Heart left ventricle (tissue), 16 donors: ENCODE measurements at regions of chr15 and their contacts with region 1.

Region 1: DNA sequence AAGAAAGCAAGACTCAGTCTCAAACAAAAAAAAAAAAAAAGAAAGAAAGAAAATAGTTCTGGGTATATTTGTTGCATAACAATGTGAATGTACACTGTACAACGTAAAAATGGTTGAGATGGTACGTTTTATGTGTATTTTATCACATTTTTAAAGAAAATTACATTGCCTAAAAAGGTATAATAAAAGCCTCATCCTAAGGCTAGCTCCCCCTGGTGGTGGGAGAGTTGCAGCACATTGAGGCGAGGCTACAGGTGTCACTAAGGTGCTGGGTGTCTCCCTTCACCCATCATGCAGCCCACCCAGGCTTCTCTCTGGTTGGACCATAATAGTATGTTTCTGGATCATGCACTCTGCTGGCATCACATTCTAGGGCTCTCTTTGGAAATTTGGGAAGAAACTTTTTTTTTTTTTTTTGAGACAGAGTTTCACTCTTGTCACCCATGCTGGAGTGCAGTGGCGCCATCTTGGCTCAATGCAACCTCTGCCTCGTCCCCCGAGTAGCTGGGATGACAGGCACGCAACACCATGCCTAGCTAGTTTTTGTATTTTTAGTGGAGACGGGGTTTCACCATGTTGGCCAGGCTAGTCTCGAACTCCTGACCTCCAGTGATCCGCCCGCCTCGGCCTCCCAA is 12.4 kb upstream of the RAB11A start:
- DNase-seq: peak; percentile 47 to 73 (median 58)
- ATAC-seq: peak in 3 of 4 donors; percentile 42 to 61 (median 49)
- H3K4me3 ChIP-seq: no peak overlapping the region
- H3K27ac ChIP-seq: no peak overlapping the region
- H3K4me1 ChIP-seq: peaks cover 0 to 4% (median 0%) of the 10 kb centered on the region in 12 donors
- H3K27me3 ChIP-seq: no peaks in the 10 kb centered on the region
- CTCF ChIP-seq: peak; percentile 69 to 88 (median 80)
- POLR2A ChIP-seq: no peak

Region 2: GRCh38 chr15:65841121-65841925 is 15.6 kb before region 1 on chr15:
- intact Hi-C with region 1: loop called in 1 of 10 experiments (anchors 1 kb)
- DNase-seq: peak in 2 of 5 donors; percentile 18 to 32
- ATAC-seq: peak in 1 of 4 donors; percentile 16
- H3K4me3 ChIP-seq: peak overlapping the region in 6 of 12 donors; percentile 12 to 39 (median 16)
- H3K27ac ChIP-seq: peak overlapping the region in 3 of 12 donors; percentile 1 to 34 (median 31)
- H3K4me1 ChIP-seq: peaks cover 0 to 44% (median 0%) of the 10 kb centered on the region in 12 donors
- H3K27me3 ChIP-seq: no peaks in the 10 kb centered on the region
- CTCF ChIP-seq: no peak
- POLR2A ChIP-seq: no peak